ENCODE measurements at regions of chr4 and their contacts with region 1.

Region 1: DNA sequence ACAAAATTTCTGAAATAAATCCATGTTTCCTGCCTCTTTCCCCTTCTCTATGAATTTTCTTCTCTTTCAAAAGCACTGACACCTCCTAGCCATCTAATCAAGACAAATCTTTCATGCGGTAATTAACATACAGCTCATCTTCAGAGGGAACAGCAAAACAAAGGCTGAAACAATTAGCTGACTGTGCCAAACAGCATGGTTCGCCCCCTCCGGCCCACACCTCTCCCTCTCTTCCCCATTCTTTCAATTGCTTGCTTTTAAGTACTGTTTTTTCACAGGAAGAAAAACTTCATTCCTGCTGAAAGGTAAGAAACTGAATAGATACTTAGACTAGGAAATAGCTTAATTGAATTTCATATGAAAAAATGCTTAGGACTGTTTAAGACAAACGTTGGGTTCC is 291.1 kb upstream of the NOCT start:
- DNase-seq: no peak
- H3K4me3 ChIP-seq: no peak overlapping the region
- H3K27ac ChIP-seq: no peak overlapping the region
- H3K4me1 ChIP-seq: no peaks in the 10 kb centered on the region
- H3K27me3 ChIP-seq: peaks cover 11% of the 10 kb centered on the region
- CTCF ChIP-seq: no peak

Region 2: GRCh38 chr4:138757432-138757831 is 32.9 kb after region 1 on chr4:
- CTCF ChIA-PET with region 1: no interaction called
- dilution Hi-C with region 1: loop called (anchors 5 kb)
- in situ Hi-C with region 1: no loop called
- intact Hi-C with region 1: no loop called
- DNase-seq: no peak
- H3K4me3 ChIP-seq: no peak overlapping the region
- H3K27ac ChIP-seq: no peak overlapping the region
- H3K4me1 ChIP-seq: no peaks in the 10 kb centered on the region
- H3K27me3 ChIP-seq: no peaks in the 10 kb centered on the region
- CTCF ChIP-seq: no peak